Activated CD8-positive, alpha-beta T cell treated with anti-CD3 and anti-CD28 coated beads for 36 hours (primary cell): ENCODE measurements at regions of chr2 and their contacts with region 1.

Region 1: GRCh38 chr2:232315049-232315922 is 63.3 kb upstream of the ALPP start:
- DNase-seq: peak; percentile 91
- ATAC-seq: peak; percentile 89
- H3K4me3 Mint-ChIP-seq: peak overlapping the region; percentile 59
- H3K27ac Mint-ChIP-seq: peak overlapping the region; percentile 98
- H3K4me1 Mint-ChIP-seq: peaks cover 80% of the 10 kb centered on the region
- H3K27me3 Mint-ChIP-seq: no peaks in the 10 kb centered on the region
- CTCF ChIP-seq: peak; percentile 70

Region 2: GRCh38 chr2:232292395-232293154 is 22.7 kb before region 1 on chr2:
- CTCF ChIA-PET with region 1: interaction called, 53 read pairs
- POLR2A ChIA-PET with region 1: interaction called, 4 read pairs
- intact Hi-C with region 1: no loop called
- DNase-seq: peak; percentile 77
- ATAC-seq: peak; percentile 74
- H3K4me3 Mint-ChIP-seq: no peak overlapping the region
- H3K27ac Mint-ChIP-seq: no peak overlapping the region
- H3K4me1 Mint-ChIP-seq: peaks cover 10% of the 10 kb centered on the region
- H3K27me3 Mint-ChIP-seq: no peaks in the 10 kb centered on the region
- CTCF ChIP-seq: peak; percentile 81

Region 3: GRCh38 chr2:232521959-232522622 is 206.8 kb after region 1 on chr2:
- CTCF ChIA-PET with region 1: no interaction called
- POLR2A ChIA-PET with region 1: no interaction called
- intact Hi-C with region 1: no loop called
- DNase-seq: peak; percentile 74
- ATAC-seq: peak; percentile 58
- H3K4me3 Mint-ChIP-seq: no peak overlapping the region
- H3K27ac Mint-ChIP-seq: no peak overlapping the region
- H3K4me1 Mint-ChIP-seq: peaks cover 6% of the 10 kb centered on the region
- H3K27me3 Mint-ChIP-seq: peaks cover 37% of the 10 kb centered on the region
- CTCF ChIP-seq: peak; percentile 94